ENCODE measurements at regions of chr9 and their contacts with region 1.

Region 1: DNA sequence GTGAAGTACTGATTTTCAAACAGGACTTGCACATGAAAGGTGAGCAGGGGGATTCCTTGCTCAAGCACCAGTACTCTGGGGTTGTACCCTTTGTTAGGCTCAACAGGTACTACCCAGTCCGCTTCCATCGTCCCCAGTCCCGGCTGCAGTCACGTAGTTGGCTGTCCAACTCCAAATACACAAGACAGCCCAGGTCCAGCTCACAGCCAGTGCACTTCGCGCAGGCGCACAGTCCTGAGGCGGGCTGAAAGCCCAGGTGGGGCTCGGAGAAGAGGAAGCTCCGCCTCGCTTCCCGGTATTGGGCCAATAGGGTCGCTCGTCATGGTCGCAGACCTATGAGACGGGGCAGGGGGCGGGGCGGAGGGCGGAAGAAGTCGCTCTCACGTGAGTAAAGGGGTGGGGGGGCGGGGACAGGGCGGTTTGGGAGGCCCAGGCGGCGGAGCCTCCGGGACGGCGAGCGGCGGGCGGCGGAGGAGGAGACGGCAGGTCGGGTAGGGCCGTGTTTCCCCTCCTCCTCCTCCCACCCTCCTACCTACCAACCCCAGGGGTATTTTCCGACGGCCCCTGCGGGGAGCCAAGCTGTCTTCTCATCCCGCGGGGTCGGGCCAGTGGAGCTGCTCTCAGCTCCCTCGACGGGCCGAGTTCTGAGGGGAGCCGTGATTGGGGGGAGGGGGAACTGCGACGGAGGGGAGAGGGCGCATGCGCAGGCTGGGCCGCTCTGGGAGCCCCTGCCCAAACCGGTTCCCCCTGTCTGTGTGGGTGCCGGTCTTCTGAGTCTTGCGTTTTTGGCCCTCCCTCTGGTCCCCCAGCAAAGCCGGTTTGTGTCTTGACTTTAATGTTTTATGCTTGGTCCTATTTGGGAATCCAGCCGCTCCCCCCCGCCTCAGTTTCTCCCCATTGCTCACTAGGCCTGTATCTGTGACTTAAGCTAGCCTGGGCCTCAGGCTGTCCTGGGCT is at the start of gene RABGAP1:
- DNase-seq: peak; percentile 98
- ATAC-seq: peak; percentile 99
- H3K4me3 ChIP-seq: peak within 1 kb of the TSS; percentile 75 to 85 (median 83)
- H3K4me3 Mint-ChIP-seq: peak within 1 kb of the TSS; percentile 89
- H3K27ac ChIP-seq: peak within 1 kb of the TSS; percentile 77 to 91
- H3K27ac Mint-ChIP-seq: peak within 1 kb of the TSS; percentile 81
- H3K4me1 ChIP-seq: peaks cover 16 to 17% of the 10 kb centered on the region in 2 donors
- H3K4me1 Mint-ChIP-seq: peaks cover 34% of the 10 kb centered on the region
- H3K27me3 ChIP-seq: no peaks in the 10 kb centered on the region
- H3K27me3 Mint-ChIP-seq: no peaks in the 10 kb centered on the region
- CTCF ChIP-seq: no peak
- total RNA-seq, gene RABGAP1: 79.7 and 81.0 TPM in 2 replicates

Region 2: DNA sequence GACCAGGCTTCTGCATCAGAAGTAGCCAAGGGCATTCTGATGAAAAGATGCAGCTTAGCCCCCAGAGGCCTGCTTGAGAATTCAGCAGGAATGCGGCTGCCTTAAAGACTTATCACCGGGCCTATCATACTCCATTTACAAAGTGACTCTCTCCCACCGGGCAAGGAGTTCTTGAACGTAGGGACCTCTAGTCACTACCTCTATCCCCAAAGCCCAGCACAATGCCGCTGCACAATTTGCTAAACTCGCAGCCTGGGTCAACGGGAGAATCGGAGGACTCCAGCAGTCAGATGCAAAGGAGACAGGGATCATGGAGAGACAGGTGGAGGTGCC is 113.2 kb before region 1 on chr9:
- CTCF ChIA-PET with region 1: no interaction called
- POLR2A ChIA-PET with region 1: interaction called, 4 read pairs
- intact Hi-C with region 1: loop called (anchors 1 kb)
- DNase-seq: no peak
- ATAC-seq: peak; percentile 1
- H3K4me3 ChIP-seq: peak overlapping the region; percentile 74 to 98 (median 77)
- H3K4me3 Mint-ChIP-seq: peak overlapping the region; percentile 92
- H3K27ac ChIP-seq: peak overlapping the region; percentile 82 to 85
- H3K27ac Mint-ChIP-seq: peak overlapping the region; percentile 88
- H3K4me1 ChIP-seq: peaks cover 8 to 20% of the 10 kb centered on the region in 2 donors
- H3K4me1 Mint-ChIP-seq: peaks cover 31% of the 10 kb centered on the region
- H3K27me3 ChIP-seq: no peaks in the 10 kb centered on the region
- H3K27me3 Mint-ChIP-seq: no peaks in the 10 kb centered on the region
- CTCF ChIP-seq: no peak

Region 3: GRCh38 chr9:122912964-122913673 is 27.8 kb before region 1 on chr9 and contains the start of gene ZBTB6:
- CTCF ChIA-PET with region 1: interaction called, 8 read pairs
- POLR2A ChIA-PET with region 1: interaction called, 13 read pairs
- intact Hi-C with region 1: loop called (anchors 1 kb)
- DNase-seq: peak; percentile 92
- ATAC-seq: peak; percentile 93
- H3K4me3 ChIP-seq: peak within 1 kb of the TSS; percentile 68 to 92 (median 83)
- H3K4me3 Mint-ChIP-seq: peak within 1 kb of the TSS; percentile 89
- H3K27ac ChIP-seq: peak within 1 kb of the TSS; percentile 81
- H3K27ac Mint-ChIP-seq: peak within 1 kb of the TSS; percentile 97
- H3K4me1 ChIP-seq: peaks cover 13 to 16% of the 10 kb centered on the region in 2 donors
- H3K4me1 Mint-ChIP-seq: peaks cover 25% of the 10 kb centered on the region
- H3K27me3 ChIP-seq: no peaks in the 10 kb centered on the region
- H3K27me3 Mint-ChIP-seq: no peaks in the 10 kb centered on the region
- CTCF ChIP-seq: no peak
- total RNA-seq, gene ZBTB6: 18.9 and 19.9 TPM in 2 replicates

Region 4: DNA sequence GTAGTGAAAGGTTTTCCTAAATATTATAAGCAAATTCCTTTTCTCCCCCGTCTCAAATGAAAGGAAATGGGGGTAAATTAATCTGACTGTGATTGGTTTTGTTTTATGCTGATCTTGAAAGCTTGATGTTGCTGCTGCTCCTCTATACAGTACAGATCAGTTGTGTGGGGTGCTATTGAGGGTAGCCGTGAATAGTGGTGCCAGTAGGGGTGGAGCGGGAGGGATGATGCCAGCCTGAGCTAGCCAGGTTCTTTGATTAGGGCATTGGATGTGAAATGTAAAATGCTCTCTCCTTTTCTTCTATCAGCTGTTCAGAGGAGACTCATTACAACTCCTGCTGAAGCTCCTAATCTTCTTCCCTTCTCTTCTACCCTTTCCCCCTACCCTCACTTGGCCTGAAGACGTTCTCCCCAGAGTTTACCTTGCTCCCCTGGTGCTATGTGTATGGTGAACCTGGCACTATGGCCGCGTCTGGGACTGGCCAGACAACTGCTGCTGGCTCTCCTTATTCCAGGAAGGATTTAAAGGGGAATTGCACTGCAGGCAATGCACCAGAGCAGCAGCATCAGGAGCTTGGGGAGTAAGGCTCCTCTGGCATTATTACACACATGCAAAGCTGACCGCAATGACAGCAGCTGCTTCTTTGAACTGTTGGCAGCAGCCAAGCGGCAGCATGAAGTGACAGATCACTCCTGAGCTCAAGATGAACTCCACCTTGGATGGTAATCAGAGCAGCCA is 93.2 kb after region 1 on chr9:
- CTCF ChIA-PET with region 1: no interaction called
- POLR2A ChIA-PET with region 1: no interaction called
- intact Hi-C with region 1: no loop called
- DNase-seq: peak; percentile 23
- ATAC-seq: no peak
- H3K4me3 ChIP-seq: no peak overlapping the region
- H3K4me3 Mint-ChIP-seq: no peak overlapping the region
- H3K27ac ChIP-seq: no peak overlapping the region
- H3K27ac Mint-ChIP-seq: no peak overlapping the region
- H3K4me1 ChIP-seq: peaks cover 13 to 20% of the 10 kb centered on the region in 2 donors
- H3K4me1 Mint-ChIP-seq: peaks cover 22% of the 10 kb centered on the region
- H3K27me3 ChIP-seq: no peaks in the 10 kb centered on the region
- H3K27me3 Mint-ChIP-seq: no peaks in the 10 kb centered on the region
- CTCF ChIP-seq: no peak

Region 5: GRCh38 chr9:123201083-123201482 is 260.2 kb after region 1 on chr9:
- CTCF ChIA-PET with region 1: no interaction called
- POLR2A ChIA-PET with region 1: interaction called, 10 read pairs
- intact Hi-C with region 1: no loop called
- DNase-seq: peak; percentile 49
- ATAC-seq: peak; percentile 47
- H3K4me3 ChIP-seq: peak overlapping the region in 1 of 5 experiments; percentile 4
- H3K4me3 Mint-ChIP-seq: peak overlapping the region; percentile 20
- H3K27ac ChIP-seq: peak overlapping the region in 1 of 2 donors; percentile 4
- H3K27ac Mint-ChIP-seq: peak overlapping the region; percentile 67
- H3K4me1 ChIP-seq: peaks cover 14 to 16% of the 10 kb centered on the region in 2 donors
- H3K4me1 Mint-ChIP-seq: peaks cover 46% of the 10 kb centered on the region
- H3K27me3 ChIP-seq: no peaks in the 10 kb centered on the region
- H3K27me3 Mint-ChIP-seq: no peaks in the 10 kb centered on the region
- CTCF ChIP-seq: no peak

Measured in B cell (primary cell).